ENCODE measurements at regions of chr21 and their contacts with region 1.

Region 1: DNA sequence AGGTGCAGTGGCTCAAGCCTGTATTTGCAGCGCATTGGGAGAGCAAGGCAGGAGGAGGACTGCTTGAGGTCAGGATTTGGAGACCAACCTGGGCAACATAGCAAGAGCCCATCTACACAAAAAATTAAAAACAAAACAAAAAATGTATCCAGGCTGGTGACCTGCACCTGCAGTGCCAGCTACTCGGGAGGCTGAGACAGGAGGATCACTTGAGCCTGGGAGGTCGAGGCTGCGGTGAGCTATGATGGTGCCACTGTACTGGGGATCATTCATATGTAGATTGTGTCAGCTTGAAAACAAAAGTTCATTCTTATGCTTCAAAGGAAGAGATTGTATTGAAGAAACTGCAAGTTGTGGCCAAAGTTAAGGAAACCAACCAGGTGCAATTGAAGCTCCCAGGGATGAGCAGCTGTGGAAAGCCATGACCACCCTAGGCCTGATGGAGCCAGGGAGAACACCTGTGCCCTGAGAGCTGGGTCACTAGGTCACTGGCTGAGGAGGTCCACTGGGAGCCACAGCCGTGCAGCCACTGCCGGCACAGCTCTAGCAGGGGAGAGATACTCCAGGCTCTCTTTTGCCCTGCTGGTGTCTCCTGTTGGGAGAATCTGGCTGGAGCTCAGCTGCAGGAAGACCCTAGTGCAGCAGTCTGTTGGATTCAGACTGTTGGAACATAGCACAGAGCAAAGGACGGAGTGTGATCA is 13.3 kb upstream of the BRWD1 start:
- DNase-seq: no peak
- H3K4me3 ChIP-seq: no peak overlapping the region
- H3K27ac ChIP-seq: no peak overlapping the region
- H3K4me1 ChIP-seq: peaks cover 0 to 2% (median under 1%) of the 10 kb centered on the region in 4 experiments; a peak in 2 of 7 replicates
- H3K27me3 ChIP-seq: no peaks in the 10 kb centered on the region
- CTCF ChIP-seq: no peak
- EP300 ChIP-seq: no peak
- POLR2A ChIP-seq: no peak
- RAD21 ChIP-seq: no peak

Region 2: GRCh38 chr21:39340687-39341086 is 13.9 kb after region 1 on chr21:
- CTCF ChIA-PET with region 1: interaction called, 4 read pairs
- POLR2A ChIA-PET with region 1: interaction called, 31 read pairs
- DNase-seq: no peak
- H3K4me3 ChIP-seq: no peak overlapping the region
- H3K27ac ChIP-seq: no peak overlapping the region
- H3K4me1 ChIP-seq: peaks cover 0 to 3% (median 0%) of the 10 kb centered on the region in 4 experiments; a peak in 1 of 7 replicates
- H3K27me3 ChIP-seq: no peaks in the 10 kb centered on the region
- CTCF ChIP-seq: no peak
- EP300 ChIP-seq: no peak
- POLR2A ChIP-seq: no peak
- RAD21 ChIP-seq: no peak

Measured in H1 (cell line).